CD4-positive, alpha-beta T cell (primary cell): ENCODE measurements at regions of chr21 and their contacts with region 1.

Region 1: GRCh38 chr21:33386222-33386784 is 16.9 kb upstream of the IFNGR2 start:
- DNase-seq: no peak
- ATAC-seq: no peak
- H3K4me3 ChIP-seq: no peak overlapping the region
- H3K4me3 Mint-ChIP-seq: no peak overlapping the region
- H3K27ac ChIP-seq: no peak overlapping the region
- H3K27ac Mint-ChIP-seq: no peak overlapping the region
- H3K4me1 ChIP-seq: peaks cover 45% of the 10 kb centered on the region
- H3K4me1 Mint-ChIP-seq: peaks cover 44% of the 10 kb centered on the region
- H3K27me3 ChIP-seq: no peaks in the 10 kb centered on the region
- H3K27me3 Mint-ChIP-seq: no peaks in the 10 kb centered on the region
- CTCF ChIP-seq: no peak

Region 2: GRCh38 chr21:32712043-32712442 is 674.3 kb before region 1 on chr21:
- CTCF ChIA-PET with region 1: no interaction called
- POLR2A ChIA-PET with region 1: no interaction called
- intact Hi-C with region 1: no loop called
- DNase-seq: peak in 3 of 14 experiments; percentile 24 to 34 (median 30)
- ATAC-seq: peak; percentile 43
- H3K4me3 ChIP-seq: no peak overlapping the region
- H3K4me3 Mint-ChIP-seq: no peak overlapping the region
- H3K27ac ChIP-seq: no peak overlapping the region
- H3K27ac Mint-ChIP-seq: no peak overlapping the region
- H3K4me1 ChIP-seq: no peaks in the 10 kb centered on the region
- H3K4me1 Mint-ChIP-seq: peaks cover 54% of the 10 kb centered on the region
- H3K27me3 ChIP-seq: no peaks in the 10 kb centered on the region
- H3K27me3 Mint-ChIP-seq: no peaks in the 10 kb centered on the region
- CTCF ChIP-seq: no peak

Region 3: DNA sequence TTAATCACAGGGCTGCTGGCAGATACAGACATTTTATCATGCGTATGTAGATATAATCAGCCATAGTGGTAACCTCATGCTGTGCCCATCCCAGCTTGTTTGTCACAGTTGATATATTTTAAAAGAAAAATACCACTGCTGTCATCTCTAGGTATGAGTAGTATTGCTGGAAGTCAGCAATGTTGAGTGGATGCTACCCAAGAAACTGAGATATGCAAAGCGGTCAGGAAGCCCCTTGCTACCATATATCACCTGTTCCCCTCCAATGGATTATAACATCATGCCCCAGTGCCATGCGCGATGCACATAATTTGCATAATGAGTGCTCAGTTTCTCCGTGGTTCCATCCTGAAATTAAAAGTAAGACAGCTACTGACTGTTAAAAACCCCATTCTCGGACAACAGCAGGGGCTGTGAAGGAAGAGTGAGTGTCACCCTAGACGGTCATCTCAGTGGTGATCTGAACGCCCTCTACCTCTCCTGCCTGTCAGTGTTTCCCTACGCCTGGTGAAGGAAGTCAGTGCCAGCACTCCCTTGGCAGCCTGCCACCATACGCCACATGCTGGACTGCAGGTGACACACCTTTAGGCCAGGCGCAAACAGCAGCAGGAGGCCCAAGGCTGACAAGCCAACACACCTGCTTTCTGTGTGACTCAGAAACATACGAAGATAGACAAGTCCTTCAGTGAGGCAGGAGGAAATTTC is 117.4 kb before region 1 on chr21:
- CTCF ChIA-PET with region 1: no interaction called
- POLR2A ChIA-PET with region 1: no interaction called
- intact Hi-C with region 1: no loop called
- DNase-seq: peak in 10 of 14 experiments; percentile 23 to 69 (median 54)
- ATAC-seq: no peak
- H3K4me3 ChIP-seq: no peak overlapping the region
- H3K4me3 Mint-ChIP-seq: peak overlapping the region; percentile 99
- H3K27ac ChIP-seq: peak overlapping the region; percentile 43 to 51
- H3K27ac Mint-ChIP-seq: peak overlapping the region; percentile 94
- H3K4me1 ChIP-seq: peaks cover 49% of the 10 kb centered on the region
- H3K4me1 Mint-ChIP-seq: peaks cover 65% of the 10 kb centered on the region
- H3K27me3 ChIP-seq: no peaks in the 10 kb centered on the region
- H3K27me3 Mint-ChIP-seq: no peaks in the 10 kb centered on the region
- CTCF ChIP-seq: no peak

Region 4: GRCh38 chr21:33403779-33404585 is 17.7 kb after region 1 on chr21:
- CTCF ChIA-PET with region 1: no interaction called
- POLR2A ChIA-PET with region 1: interaction called, 9 read pairs
- intact Hi-C with region 1: loop called (anchors 2 kb)
- DNase-seq: peak in 10 of 14 experiments; percentile 8 to 45 (median 32)
- ATAC-seq: peak; percentile 33
- H3K4me3 ChIP-seq: peak overlapping the region; percentile 82
- H3K4me3 Mint-ChIP-seq: peak overlapping the region; percentile 96
- H3K27ac ChIP-seq: peak overlapping the region in 1 of 2 donors; percentile 65
- H3K27ac Mint-ChIP-seq: peak overlapping the region; percentile 84
- H3K4me1 ChIP-seq: peaks cover 38% of the 10 kb centered on the region
- H3K4me1 Mint-ChIP-seq: peaks cover 47% of the 10 kb centered on the region
- H3K27me3 ChIP-seq: no peaks in the 10 kb centered on the region
- H3K27me3 Mint-ChIP-seq: no peaks in the 10 kb centered on the region
- CTCF ChIP-seq: no peak